Right ventricle myocardium superior (tissue), 1 donor: ENCODE measurements at regions of chr3 and their contacts with region 1.

Region 1: GRCh38 chr3:141738022-141738890 is at the start of gene RNF7:
- DNase-seq: peak; percentile 98
- ATAC-seq: peak; percentile 99
- total RNA-seq, gene RNF7: 87.4 TPM

Region 2: GRCh38 chr3:141597931-141598330 is 140.3 kb before region 1 on chr3:
- intact Hi-C with region 1: loop called (anchors 10 kb)
- DNase-seq: no peak
- ATAC-seq: no peak

Region 3: GRCh38 chr3:141816958-141817357 is 78.7 kb after region 1 on chr3:
- intact Hi-C with region 1: no loop called
- DNase-seq: no peak
- ATAC-seq: no peak

Region 4: DNA sequence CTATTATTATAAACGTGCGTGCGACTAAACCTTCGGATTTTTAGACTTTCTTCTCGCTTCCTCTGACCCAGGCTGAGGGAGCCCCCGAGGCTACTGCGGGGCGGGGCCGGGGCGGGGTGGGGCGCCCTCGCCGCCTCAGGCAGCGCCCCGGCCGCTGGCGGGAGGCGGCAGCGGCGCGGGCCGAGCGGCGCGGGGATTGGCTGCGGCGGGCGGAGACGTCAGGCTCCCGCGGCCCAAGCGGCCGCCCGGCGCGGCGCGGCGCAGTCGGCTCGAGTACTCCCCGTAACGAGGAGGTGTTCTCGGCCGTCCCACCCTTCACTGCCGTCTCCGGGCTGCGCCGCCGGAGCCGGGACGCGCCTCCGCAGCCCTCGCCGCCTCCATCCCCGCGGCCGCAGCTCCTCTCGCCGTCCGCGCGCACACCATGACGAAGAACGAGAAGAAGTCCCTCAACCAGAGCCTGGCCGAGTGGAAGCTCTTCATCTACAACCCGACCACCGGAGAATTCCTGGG is 138.2 kb after region 1 on chr3 and contains the start of gene ATP1B3:
- intact Hi-C with region 1: loop called (anchors 2 kb)
- DNase-seq: peak; percentile 90
- ATAC-seq: peak; percentile 94
- total RNA-seq, gene ATP1B3: 32.9 TPM

Region 5: GRCh38 chr3:141913150-141913811 is 175.0 kb after region 1 on chr3:
- intact Hi-C with region 1: loop called (anchors 2 kb)
- DNase-seq: no peak
- ATAC-seq: peak; percentile 65